ENCODE measurements at regions of chr3 and their contacts with region 1.

Region 1: GRCh38 chr3:111473316-111473949 is 68.6 kb upstream of the CD96 start:
- DNase-seq: no peak
- ATAC-seq: no peak
- H3K4me3 ChIP-seq: no peak overlapping the region
- H3K4me3 Mint-ChIP-seq: no peak overlapping the region
- H3K27ac ChIP-seq: no peak overlapping the region
- H3K27ac Mint-ChIP-seq: no peak overlapping the region
- H3K4me1 ChIP-seq: no peaks in the 10 kb centered on the region
- H3K4me1 Mint-ChIP-seq: no peaks in the 10 kb centered on the region
- H3K27me3 ChIP-seq: peaks cover 0 to 3% of the 10 kb centered on the region in 2 experiments
- H3K27me3 Mint-ChIP-seq: peaks cover 2 to 7% of the 10 kb centered on the region in 2 donors

Region 2: DNA sequence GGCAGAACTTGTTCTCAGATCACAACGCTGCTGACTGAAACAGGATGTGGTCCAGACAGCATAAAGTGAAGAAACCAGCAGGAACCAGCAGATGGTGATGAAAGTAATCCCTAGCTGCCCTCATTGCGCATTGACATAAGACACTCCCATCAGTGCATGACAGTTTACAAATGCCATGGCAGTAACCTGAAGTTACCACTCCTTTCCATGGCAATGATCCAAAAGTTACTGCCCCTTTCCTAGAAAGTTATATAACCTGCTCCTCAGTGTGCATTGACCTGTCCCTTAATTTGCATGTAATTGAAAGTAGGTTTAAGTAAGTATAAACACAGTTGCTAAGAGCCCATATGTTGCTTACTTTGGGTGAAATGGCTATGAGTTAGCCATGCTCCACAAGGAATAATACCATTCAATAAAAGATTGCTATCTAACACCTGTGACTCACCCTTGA is 80.5 kb before region 1 on chr3:
- CTCF ChIA-PET with region 1: interaction called in 1 of 2 experiments, 11 read pairs
- POLR2A ChIA-PET with region 1: no interaction called
- DNase-seq: peak in 33 of 35 experiments; percentile 7 to 79 (median 39)
- ATAC-seq: peak; percentile 93 to 99 (median 98)
- H3K4me3 ChIP-seq: no peak overlapping the region
- H3K4me3 Mint-ChIP-seq: peak overlapping the region in 1 of 3 donors; percentile 31
- H3K27ac ChIP-seq: peak overlapping the region; percentile 62
- H3K27ac Mint-ChIP-seq: peak overlapping the region; percentile 91
- H3K4me1 ChIP-seq: peaks cover 0 to 2% of the 10 kb centered on the region in 2 experiments
- H3K4me1 Mint-ChIP-seq: peaks cover 22 to 28% (median 27%) of the 10 kb centered on the region in 3 donors
- H3K27me3 ChIP-seq: no peaks in the 10 kb centered on the region
- H3K27me3 Mint-ChIP-seq: no peaks in the 10 kb centered on the region

Region 3: GRCh38 chr3:111538687-111539086 is 65.3 kb after region 1 on chr3:
- CTCF ChIA-PET with region 1: no interaction called
- POLR2A ChIA-PET with region 1: no interaction called
- DNase-seq: peak in 1 of 35 experiments; percentile 40
- ATAC-seq: no peak
- H3K4me3 ChIP-seq: no peak overlapping the region
- H3K4me3 Mint-ChIP-seq: peak overlapping the region in 2 of 3 donors; percentile 68 to 79
- H3K27ac ChIP-seq: peak overlapping the region; percentile 56
- H3K27ac Mint-ChIP-seq: peak overlapping the region; percentile 98 to 99
- H3K4me1 ChIP-seq: peaks cover 20 to 42% of the 10 kb centered on the region in 2 experiments
- H3K4me1 Mint-ChIP-seq: peaks cover 55 to 61% (median 57%) of the 10 kb centered on the region in 3 donors
- H3K27me3 ChIP-seq: no peaks in the 10 kb centered on the region
- H3K27me3 Mint-ChIP-seq: no peaks in the 10 kb centered on the region